Ovary (tissue), 10 donors: ENCODE measurements at regions of chrX and their contacts with region 1.

Region 1: DNA sequence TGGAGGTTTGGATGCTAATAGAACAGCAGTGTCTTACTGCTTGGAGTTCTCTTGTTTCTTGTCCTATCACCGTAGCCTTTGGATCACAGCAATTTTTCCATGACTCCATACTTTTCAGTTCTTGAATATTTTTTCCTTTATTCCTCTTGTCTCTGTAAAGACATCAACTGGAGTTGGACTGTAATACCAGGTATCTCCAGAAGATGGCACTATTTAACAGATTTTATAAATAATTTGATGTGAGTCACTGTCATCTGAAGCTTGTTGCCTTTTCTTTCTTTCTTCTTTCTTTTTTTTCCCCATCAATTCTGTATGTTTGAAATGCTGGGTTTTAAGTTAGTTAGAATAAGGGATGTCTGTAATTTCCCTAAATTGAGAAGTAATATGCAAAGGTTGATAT is 24.1 kb downstream of the HPRT1 start:
- DNase-seq: no peak
- H3K4me3 ChIP-seq: no peak overlapping the region
- H3K27ac ChIP-seq: no peak overlapping the region
- H3K4me1 ChIP-seq: no peaks in the 10 kb centered on the region
- H3K27me3 ChIP-seq: no peaks in the 10 kb centered on the region
- CTCF ChIP-seq: peak; percentile 11 to 55 (median 52)
- EP300 ChIP-seq: no peak
- POLR2A ChIP-seq: no peak

Region 2: DNA sequence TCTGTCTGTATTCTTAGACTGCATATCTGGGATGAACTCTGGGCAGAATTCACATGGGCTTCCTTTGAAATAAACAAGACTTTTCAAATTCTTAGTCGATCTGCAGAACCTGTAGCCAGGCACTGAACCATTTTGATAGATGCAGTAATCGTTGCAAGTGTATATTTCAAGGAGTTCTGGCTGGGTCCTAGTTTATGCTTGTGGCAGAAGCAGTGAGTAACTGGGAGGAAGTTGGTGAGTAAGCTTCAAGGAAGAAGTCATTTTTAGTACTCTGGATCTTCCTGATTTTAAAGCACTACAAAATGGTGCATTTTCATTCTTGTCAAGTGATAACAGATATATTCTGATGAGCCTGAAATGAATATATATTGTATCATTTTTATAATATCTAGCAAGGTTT is 14.6 kb before region 1 on chrX:
- intact Hi-C with region 1: no loop called
- DNase-seq: no peak
- H3K4me3 ChIP-seq: no peak overlapping the region
- H3K27ac ChIP-seq: no peak overlapping the region
- H3K4me1 ChIP-seq: no peaks in the 10 kb centered on the region
- H3K27me3 ChIP-seq: no peaks in the 10 kb centered on the region
- CTCF ChIP-seq: no peak
- EP300 ChIP-seq: no peak
- POLR2A ChIP-seq: no peak

Region 3: GRCh38 chrX:134753718-134754008 is 269.6 kb after region 1 on chrX:
- intact Hi-C with region 1: loop called in 2 of 4 experiments (anchors 10 kb)
- DNase-seq: no peak
- H3K4me3 ChIP-seq: no peak overlapping the region
- H3K27ac ChIP-seq: no peak overlapping the region
- H3K4me1 ChIP-seq: no peaks in the 10 kb centered on the region
- H3K27me3 ChIP-seq: no peaks in the 10 kb centered on the region
- CTCF ChIP-seq: peak in 1 of 3 donors; percentile 9
- EP300 ChIP-seq: no peak
- POLR2A ChIP-seq: no peak